ENCODE measurements at regions of chr20 and their contacts with region 1.

Region 1: DNA sequence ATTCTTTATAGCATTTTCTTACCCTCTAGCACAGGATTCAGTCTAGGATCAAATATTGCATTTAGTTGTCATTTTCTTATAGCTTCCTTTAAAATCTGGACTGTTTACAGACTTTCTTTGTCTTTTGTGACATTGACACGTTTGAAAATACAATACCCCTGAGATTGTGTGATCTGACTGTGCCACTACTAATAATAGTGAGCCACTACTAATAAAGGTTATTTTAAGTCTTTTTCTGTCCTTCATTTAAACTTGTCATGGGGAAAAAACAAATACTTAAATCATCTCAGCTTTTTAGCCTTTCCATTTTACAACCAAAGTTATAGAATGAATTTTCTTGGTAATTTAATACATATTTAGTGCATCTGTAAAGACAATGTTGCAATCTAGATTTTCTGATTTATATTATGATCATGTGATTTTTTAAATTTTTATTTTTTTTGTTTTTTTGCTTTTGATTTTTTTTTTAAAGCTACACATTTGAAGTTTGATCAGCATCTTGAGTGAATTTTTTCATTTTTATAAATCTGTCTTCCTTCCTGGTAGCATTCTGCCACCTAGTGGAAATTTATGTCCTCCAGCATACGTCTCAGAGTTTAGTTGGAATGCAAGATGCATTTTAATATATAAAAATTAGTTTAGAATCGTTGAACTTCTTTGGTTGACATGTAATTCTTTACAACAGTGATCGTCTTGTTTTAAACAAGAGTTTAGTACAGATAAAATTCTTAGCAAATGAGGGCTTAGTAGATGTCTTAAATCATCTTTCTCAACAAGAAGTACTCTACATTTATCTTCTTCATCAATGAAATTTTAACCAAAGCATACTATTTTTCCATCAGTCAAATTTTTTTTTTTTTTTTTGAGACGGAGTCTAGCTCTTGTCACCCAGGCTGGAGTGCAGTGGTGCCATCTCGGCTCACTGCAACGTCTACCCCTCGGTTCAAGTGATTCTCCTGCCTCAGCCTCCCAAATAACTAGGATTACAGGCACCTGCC is 119.4 kb downstream of the NCOA3 start:
- DNase-seq: no peak
- H3K4me3 ChIP-seq: no peak overlapping the region
- H3K27me3 ChIP-seq: no peaks in the 10 kb centered on the region
- CTCF ChIP-seq: peak; percentile 73

Region 2: GRCh38 chr20:47600967-47601547 is 20.1 kb before region 1 on chr20:
- CTCF ChIA-PET with region 1: interaction called, 12 read pairs
- POLR2A ChIA-PET with region 1: no interaction called
- DNase-seq: no peak
- H3K4me3 ChIP-seq: no peak overlapping the region
- H3K27me3 ChIP-seq: no peaks in the 10 kb centered on the region
- CTCF ChIP-seq: no peak

Region 3: DNA sequence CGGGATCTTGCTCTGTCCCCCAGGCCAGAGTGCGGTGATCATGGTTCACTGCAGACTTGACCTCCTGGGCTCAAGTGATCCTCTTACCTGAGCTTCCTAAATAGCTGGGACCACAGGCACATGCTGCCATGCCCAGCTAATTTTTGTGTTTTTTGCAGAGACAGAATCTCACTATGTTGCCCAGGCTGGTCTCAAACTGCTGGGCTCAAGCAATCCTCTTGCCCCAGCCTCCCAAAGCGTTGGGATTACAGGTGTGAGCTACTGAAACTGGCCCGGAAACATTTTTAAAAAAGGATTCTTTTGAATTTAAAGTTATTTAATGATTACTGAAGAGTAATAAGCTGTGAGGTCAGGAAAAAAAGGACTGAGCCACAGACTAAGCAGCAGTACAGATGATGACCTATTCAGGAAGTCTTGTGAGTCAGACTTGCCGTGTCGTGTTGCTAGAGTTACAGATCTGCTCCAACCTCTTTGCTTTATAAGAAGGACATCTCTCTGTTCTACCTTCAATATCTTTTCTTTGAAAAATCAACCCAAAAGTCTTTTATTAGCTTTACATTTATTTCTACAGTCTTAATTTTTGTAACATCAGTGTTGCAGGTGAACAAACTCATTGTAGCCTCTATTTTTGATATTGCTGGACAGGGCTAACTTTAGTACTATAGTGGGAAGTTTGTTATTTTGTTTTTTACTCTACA is 10.7 kb before region 1 on chr20:
- CTCF ChIA-PET with region 1: interaction called, 12 read pairs
- POLR2A ChIA-PET with region 1: interaction called, 4 read pairs
- DNase-seq: peak; percentile 46
- H3K4me3 ChIP-seq: no peak overlapping the region
- H3K27me3 ChIP-seq: no peaks in the 10 kb centered on the region
- CTCF ChIP-seq: no peak

Region 4: GRCh38 chr20:47663333-47664067 is 42.4 kb after region 1 on chr20:
- CTCF ChIA-PET with region 1: no interaction called
- POLR2A ChIA-PET with region 1: no interaction called
- DNase-seq: no peak
- H3K4me3 ChIP-seq: no peak overlapping the region
- H3K27me3 ChIP-seq: no peaks in the 10 kb centered on the region
- CTCF ChIP-seq: peak; percentile 96